ENCODE measurements at regions of chr2 and their contacts with region 1.

Region 1: GRCh38 chr2:120174963-120175581 is 48.1 kb downstream of the TMEM185B start:
- DNase-seq: peak; percentile 47
- H3K4me3 ChIP-seq: no peak overlapping the region
- H3K27ac ChIP-seq: no peak overlapping the region
- H3K4me1 ChIP-seq: peaks cover 10% of the 10 kb centered on the region
- H3K27me3 ChIP-seq: no peaks in the 10 kb centered on the region
- CTCF ChIP-seq: peak; percentile 54 to 70

Region 2: DNA sequence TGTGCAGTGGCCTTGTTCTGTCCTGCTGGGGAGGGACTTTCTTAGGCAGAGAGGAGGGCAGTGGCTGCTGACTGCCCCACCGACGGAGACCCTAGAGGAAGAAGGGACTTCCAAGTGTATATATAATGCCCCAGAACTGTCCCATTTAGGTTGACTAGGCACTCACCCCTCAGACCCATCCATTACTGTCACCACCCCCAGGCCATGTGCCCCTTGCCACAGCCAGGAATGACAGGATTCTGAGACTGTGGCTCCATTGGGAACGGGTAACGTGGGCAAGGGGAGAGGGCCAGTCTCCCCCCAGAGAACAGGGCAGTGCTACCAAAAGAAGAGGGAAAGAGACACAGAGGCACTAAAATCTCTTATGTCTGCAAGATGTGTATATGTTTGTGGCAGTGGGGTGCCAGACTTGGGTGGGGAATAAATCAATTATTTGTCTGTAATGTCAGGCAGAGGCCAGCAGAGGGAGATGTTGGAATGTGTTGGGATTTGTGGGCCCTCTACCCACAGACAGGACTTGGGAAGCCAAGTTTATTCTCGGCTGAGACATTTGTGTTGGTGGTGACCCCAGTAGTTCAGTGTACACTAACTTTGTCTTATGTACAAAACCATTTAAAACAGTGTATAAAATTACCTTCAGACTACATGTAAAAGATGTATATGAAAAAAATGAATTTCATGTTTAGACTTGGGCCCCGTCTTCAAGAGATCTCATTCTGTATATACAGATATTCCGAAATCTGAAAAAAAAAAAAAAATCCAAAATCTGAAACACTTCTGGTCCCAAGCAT is 767.4 kb before region 1 on chr2:
- CTCF ChIA-PET with region 1: no interaction called
- dilution Hi-C with region 1: no loop called
- in situ Hi-C with region 1: no loop called
- intact Hi-C with region 1: loop called (anchors 5 kb)
- DNase-seq: peak; percentile 25
- H3K4me3 ChIP-seq: no peak overlapping the region
- H3K27ac ChIP-seq: no peak overlapping the region
- H3K4me1 ChIP-seq: no peaks in the 10 kb centered on the region
- H3K27me3 ChIP-seq: peaks cover 4% of the 10 kb centered on the region
- CTCF ChIP-seq: peak; percentile 75 to 76

Region 3: GRCh38 chr2:119641562-119642258 is 533.4 kb before region 1 on chr2:
- CTCF ChIA-PET with region 1: no interaction called
- dilution Hi-C with region 1: no loop called
- in situ Hi-C with region 1: no loop called
- intact Hi-C with region 1: loop called (anchors 1 kb)
- DNase-seq: peak; percentile 67
- H3K4me3 ChIP-seq: no peak overlapping the region
- H3K27ac ChIP-seq: no peak overlapping the region
- H3K4me1 ChIP-seq: no peaks in the 10 kb centered on the region
- H3K27me3 ChIP-seq: peaks cover 2% of the 10 kb centered on the region
- CTCF ChIP-seq: peak; percentile 98

Region 4: GRCh38 chr2:119702918-119703401 is 472.1 kb before region 1 on chr2:
- CTCF ChIA-PET with region 1: interaction called, 3 read pairs
- dilution Hi-C with region 1: no loop called
- in situ Hi-C with region 1: no loop called
- intact Hi-C with region 1: loop called (anchors 1 kb)
- DNase-seq: peak; percentile 44
- H3K4me3 ChIP-seq: no peak overlapping the region
- H3K27ac ChIP-seq: no peak overlapping the region
- H3K4me1 ChIP-seq: no peaks in the 10 kb centered on the region
- H3K27me3 ChIP-seq: no peaks in the 10 kb centered on the region
- CTCF ChIP-seq: peak; percentile 90 to 99

Region 5: DNA sequence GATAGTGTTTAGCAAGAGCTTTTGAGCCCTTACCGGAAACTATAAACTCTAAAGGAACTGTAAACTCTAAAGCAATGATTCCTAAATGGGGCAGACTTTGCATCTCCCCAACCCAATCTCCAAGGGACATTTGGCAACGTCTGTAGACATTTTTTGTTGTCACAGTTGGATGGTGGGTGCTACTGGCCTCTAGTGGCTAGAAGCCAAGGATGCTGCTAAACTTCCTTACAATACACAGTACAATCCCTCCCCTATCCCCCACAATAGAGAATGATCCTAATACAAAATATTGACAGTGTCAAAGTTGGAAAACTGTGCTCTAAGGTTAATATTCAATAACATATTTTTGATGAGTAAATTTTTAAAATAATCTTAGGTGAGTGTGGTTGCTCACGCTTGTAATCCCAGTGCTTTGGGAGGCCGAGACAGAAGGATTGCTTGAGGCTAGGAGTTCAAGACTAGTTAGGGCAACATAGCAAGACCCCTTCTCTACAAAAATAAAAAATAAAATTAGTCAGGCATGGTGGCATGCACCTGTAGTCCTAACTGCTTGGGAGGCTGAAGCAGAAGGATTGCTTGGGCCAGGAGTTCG is 348.6 kb before region 1 on chr2:
- CTCF ChIA-PET with region 1: no interaction called
- dilution Hi-C with region 1: no loop called
- in situ Hi-C with region 1: no loop called
- intact Hi-C with region 1: loop called (anchors 2 kb)
- DNase-seq: no peak
- H3K4me3 ChIP-seq: no peak overlapping the region
- H3K27ac ChIP-seq: no peak overlapping the region
- H3K4me1 ChIP-seq: no peaks in the 10 kb centered on the region
- H3K27me3 ChIP-seq: no peaks in the 10 kb centered on the region
- CTCF ChIP-seq: peak; percentile 65 to 72

Region 6: GRCh38 chr2:120109186-120110061 is 65.6 kb before region 1 on chr2:
- CTCF ChIA-PET with region 1: interaction called, 10 read pairs
- dilution Hi-C with region 1: no loop called
- in situ Hi-C with region 1: loop called (anchors 10 kb)
- intact Hi-C with region 1: loop called (anchors 1 kb)
- DNase-seq: peak; percentile 36
- H3K4me3 ChIP-seq: no peak overlapping the region
- H3K27ac ChIP-seq: peak overlapping the region; percentile 50
- H3K4me1 ChIP-seq: peaks cover 26% of the 10 kb centered on the region
- H3K27me3 ChIP-seq: no peaks in the 10 kb centered on the region
- CTCF ChIP-seq: peak; percentile 48 to 54

Region 7: DNA sequence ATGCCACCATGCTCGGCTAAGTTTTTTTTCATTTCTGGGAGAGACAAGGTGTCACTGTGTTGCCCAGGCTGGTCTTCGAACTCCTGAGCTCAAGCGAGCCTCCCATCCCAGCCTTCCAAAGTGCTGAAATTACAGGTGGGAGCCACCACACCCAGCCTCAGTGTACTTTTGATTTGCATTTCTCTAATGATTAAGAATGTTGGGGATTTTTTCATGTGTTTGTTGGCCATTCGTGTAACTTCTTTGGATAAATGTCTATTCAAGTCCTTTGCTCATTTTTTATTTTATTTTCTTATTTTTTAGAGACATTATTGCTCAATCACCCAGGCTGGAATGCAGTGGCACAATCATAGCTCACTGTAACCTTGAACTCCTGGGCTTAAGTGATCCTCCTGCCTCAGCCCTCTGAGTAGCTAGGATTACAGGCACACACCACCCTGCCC is 25.0 kb before region 1 on chr2:
- CTCF ChIA-PET with region 1: no interaction called
- dilution Hi-C with region 1: no loop called
- in situ Hi-C with region 1: no loop called
- intact Hi-C with region 1: no loop called
- DNase-seq: no peak
- H3K4me3 ChIP-seq: no peak overlapping the region
- H3K27ac ChIP-seq: no peak overlapping the region
- H3K4me1 ChIP-seq: no peaks in the 10 kb centered on the region
- H3K27me3 ChIP-seq: no peaks in the 10 kb centered on the region
- CTCF ChIP-seq: no peak

Region 8: DNA sequence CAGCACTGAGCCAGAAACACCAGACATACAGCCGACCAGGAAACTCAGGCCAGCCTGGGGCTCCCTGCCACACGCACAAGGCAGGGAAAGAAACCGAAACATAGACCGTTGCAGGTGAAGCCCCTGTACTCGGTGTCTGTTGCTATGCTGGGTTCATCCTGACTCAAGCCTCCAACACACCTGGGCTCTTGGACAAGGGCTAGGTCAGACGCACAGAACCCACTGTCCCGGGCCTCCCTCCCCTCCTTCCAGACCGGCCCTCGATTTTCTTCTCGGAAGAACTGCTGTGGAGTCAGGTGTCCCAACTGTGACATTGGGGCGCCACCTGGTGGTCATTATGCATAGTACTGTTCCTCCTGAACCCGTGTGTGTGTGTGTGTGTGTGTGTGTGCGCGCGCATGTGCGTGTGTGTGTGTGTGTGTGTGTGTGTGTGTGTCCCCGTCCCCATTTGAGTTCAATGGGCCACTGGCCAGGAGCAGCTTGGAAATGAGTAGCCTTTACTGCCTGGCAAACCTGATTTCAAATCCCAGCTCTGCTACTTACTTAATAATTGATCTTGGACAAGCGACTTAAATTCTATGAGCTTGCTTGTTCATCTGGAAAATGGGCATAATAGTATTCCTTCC is 505.2 kb after region 1 on chr2:
- CTCF ChIA-PET with region 1: no interaction called
- dilution Hi-C with region 1: no loop called
- in situ Hi-C with region 1: no loop called
- intact Hi-C with region 1: loop called (anchors 5 kb)
- DNase-seq: peak; percentile 67
- H3K4me3 ChIP-seq: no peak overlapping the region
- H3K27ac ChIP-seq: no peak overlapping the region
- H3K4me1 ChIP-seq: no peaks in the 10 kb centered on the region
- H3K27me3 ChIP-seq: no peaks in the 10 kb centered on the region
- CTCF ChIP-seq: peak; percentile 55 to 71